ENCODE measurements at regions of chr15 and their contacts with region 1.

Region 1: GRCh38 chr15:75307778-75308391 is 25.2 kb downstream of the GOLGA6D start:
- DNase-seq: peak; percentile 77 to 92
- ATAC-seq: peak; percentile 99 to 100
- H3K4me3 ChIP-seq: no peak overlapping the region
- H3K27ac ChIP-seq: peak overlapping the region in 1 of 2 experiments; percentile 42; a peak in 1 of 6 replicates
- H3K4me1 ChIP-seq: peaks cover 6% of the 10 kb centered on the region; the same call in 2 of the 3 replicates
- CTCF ChIP-seq: peak; percentile 76
- EP300 ChIP-seq: no peak
- POLR2A ChIP-seq: no peak
- RAD21 ChIP-seq: peak; percentile 93 to 96

Region 2: GRCh38 chr15:75029378-75030022 is 278.4 kb before region 1 on chr15:
- CTCF ChIA-PET with region 1: interaction called, 52 read pairs
- POLR2A ChIA-PET with region 1: no interaction called
- DNase-seq: peak; percentile 87 to 94
- ATAC-seq: peak; percentile 92 to 96
- H3K4me3 ChIP-seq: no peak overlapping the region
- H3K27ac ChIP-seq: peak overlapping the region; percentile 70 to 82
- H3K4me1 ChIP-seq: peaks cover 25% of the 10 kb centered on the region
- CTCF ChIP-seq: peak; percentile 98
- EP300 ChIP-seq: no peak
- POLR2A ChIP-seq: no peak
- RAD21 ChIP-seq: peak; percentile 98 to 99

Region 3: DNA sequence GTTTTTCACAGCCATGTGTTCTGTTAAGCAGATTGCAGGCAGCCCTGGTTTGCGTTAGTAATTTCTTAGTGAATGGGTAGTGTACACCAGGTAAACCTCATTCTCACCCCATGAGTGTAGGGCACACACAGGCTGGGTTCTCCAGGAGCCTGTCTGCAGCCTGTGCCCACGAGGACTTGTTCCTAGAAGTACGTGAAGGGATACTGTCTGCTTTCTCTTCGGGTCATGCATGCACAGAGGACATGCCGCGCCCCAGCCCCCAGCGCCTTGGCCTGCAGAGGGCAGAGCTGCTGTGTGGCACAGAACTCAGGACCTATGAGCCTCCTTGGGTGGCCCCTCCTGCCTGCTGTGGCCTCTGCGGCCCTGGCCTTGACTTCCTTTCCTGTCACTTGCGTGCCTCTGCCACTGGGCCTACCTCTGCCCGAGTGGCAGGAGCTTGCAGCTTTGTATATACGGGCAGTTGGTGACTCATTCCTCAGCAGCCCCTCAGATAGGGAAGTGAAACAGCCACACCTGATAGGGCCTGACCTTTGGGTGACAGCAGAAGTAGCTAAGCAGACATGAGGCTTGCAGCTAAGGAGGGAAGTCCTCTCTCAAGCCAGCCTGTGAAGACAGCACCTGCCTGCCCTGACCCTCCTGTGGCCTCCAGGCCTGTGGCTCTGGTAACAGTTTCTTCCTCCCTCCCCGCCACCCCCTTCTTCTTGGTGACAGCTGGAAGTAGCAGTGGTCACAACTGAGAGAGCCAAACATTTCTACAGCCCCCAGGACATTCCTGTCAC is 265.0 kb before region 1 on chr15:
- CTCF ChIA-PET with region 1: interaction called, 24 read pairs
- POLR2A ChIA-PET with region 1: no interaction called
- DNase-seq: peak; percentile 57 to 76
- ATAC-seq: peak; percentile 82 to 87
- H3K4me3 ChIP-seq: no peak overlapping the region
- H3K27ac ChIP-seq: peak overlapping the region; percentile 34 to 69
- H3K4me1 ChIP-seq: peaks cover 33% of the 10 kb centered on the region
- CTCF ChIP-seq: peak; percentile 58
- EP300 ChIP-seq: no peak
- POLR2A ChIP-seq: no peak
- RAD21 ChIP-seq: peak; percentile 80 to 83

Region 4: GRCh38 chr15:75215107-75216004 is 92.5 kb before region 1 on chr15:
- CTCF ChIA-PET with region 1: interaction called, 27 read pairs
- POLR2A ChIA-PET with region 1: no interaction called
- DNase-seq: no peak
- ATAC-seq: peak; percentile 22 to 48; a peak in 4 of 6 replicates
- H3K4me3 ChIP-seq: no peak overlapping the region
- H3K27ac ChIP-seq: no peak overlapping the region
- H3K4me1 ChIP-seq: no peaks in the 10 kb centered on the region
- CTCF ChIP-seq: no peak
- EP300 ChIP-seq: no peak
- POLR2A ChIP-seq: no peak
- RAD21 ChIP-seq: no peak

Region 5: GRCh38 chr15:75327005-75327404 is 19.1 kb after region 1 on chr15:
- CTCF ChIA-PET with region 1: interaction called, 10 read pairs
- POLR2A ChIA-PET with region 1: no interaction called
- DNase-seq: no peak
- ATAC-seq: peak; percentile 40 to 55; a peak in 2 of 6 replicates
- H3K4me3 ChIP-seq: no peak overlapping the region
- H3K27ac ChIP-seq: no peak overlapping the region
- H3K4me1 ChIP-seq: no peaks in the 10 kb centered on the region
- CTCF ChIP-seq: no peak
- EP300 ChIP-seq: no peak
- POLR2A ChIP-seq: no peak
- RAD21 ChIP-seq: no peak